Right ventricle myocardium inferior (tissue), 1 donor: ENCODE measurements at regions of chr3 and their contacts with region 1.

Region 1: DNA sequence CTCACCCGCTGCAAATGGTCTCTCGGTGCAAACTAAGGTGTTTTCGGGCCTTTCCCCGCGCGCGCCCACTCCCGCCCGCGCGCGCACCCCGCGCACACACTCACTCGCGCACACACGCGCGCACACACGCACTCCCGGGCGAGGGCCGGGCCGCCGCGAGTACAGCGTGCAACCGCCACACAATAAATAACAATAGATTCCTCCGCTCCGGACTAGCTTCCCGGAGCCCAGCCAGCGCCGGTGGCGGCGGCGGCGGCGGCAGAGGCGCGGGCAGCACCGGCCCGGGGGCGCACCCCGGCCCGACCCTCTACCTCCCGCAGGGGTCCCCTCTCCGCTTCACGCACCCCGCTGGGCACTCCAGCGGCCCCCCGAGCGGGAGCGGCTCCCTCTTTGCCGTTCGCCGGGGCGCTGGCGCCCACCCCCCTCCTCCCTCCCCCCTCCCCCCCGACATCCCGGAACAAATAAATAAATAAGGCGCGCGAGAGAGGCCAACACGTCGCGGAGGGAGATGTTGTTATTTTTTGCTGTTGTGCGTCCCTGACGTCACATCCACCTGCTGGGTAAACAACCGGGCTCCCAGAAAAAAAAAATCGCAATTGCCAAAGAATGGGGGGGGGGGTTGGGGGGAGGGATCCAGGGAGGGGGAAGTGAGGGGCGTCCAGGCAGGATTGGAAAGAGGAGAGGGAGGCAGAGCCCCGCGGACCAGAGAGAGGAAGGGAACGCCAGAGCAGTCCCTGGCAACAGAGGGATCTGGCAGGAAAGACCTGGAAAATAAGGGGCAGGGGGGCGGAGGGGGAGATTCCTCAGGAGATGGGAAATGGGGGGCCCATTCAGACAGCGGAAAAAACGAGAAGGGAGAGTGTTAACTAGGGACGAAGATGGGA is at the start of gene FOXP1:
- DNase-seq: peak; percentile 91
- ATAC-seq: peak; percentile 73
- total RNA-seq, gene FOXP1: 38.5 TPM

Region 2: GRCh38 chr3:70716832-70717231 is 867.0 kb before region 1 on chr3:
- intact Hi-C with region 1: loop called (anchors 5 kb)
- DNase-seq: peak; percentile 43
- ATAC-seq: no peak

Region 3: GRCh38 chr3:71064288-71064955 is 519.4 kb before region 1 on chr3:
- intact Hi-C with region 1: loop called (anchors 2 kb)
- DNase-seq: peak; percentile 72
- ATAC-seq: peak; percentile 30

Region 4: DNA sequence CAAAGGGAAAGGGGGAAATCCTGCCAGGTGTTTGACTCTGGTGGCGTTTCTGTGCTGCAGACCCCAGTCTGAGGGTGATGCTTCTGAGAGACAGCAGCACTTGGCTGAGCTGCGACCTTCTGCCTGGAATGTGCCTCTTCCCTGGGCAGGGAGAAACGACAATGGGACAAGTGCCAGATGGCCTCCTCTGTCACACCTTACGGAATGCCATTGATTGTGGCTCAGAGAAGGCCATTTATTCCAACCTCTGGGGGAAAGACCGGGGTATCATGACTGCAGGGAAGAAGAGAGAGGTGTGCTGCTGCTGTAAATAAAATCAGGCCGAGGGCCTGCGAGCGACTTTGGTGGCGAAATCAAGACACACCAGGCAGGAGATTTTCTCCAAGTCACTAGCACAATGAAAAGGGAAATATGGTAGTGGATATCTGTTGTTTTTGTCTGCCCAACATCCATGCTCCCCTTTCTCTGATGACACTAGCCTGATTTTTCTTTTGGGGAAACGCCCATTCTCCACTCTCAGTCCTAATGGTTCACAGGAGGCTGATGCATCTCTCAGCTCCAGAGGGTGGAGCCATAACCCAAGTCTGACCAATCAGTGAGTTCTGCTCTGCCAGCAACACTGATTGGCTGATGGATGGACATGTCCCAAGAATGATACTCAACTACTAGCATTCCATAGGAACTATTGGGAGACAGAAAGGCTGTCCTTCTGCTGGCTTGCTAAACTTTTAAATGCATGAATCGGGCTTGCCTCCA is 336.4 kb before region 1 on chr3:
- intact Hi-C with region 1: loop called (anchors 2 kb)
- DNase-seq: no peak
- ATAC-seq: no peak

Region 5: GRCh38 chr3:71397046-71397445 is 186.8 kb before region 1 on chr3:
- intact Hi-C with region 1: loop called (anchors 5 kb)
- DNase-seq: no peak
- ATAC-seq: no peak

Region 6: DNA sequence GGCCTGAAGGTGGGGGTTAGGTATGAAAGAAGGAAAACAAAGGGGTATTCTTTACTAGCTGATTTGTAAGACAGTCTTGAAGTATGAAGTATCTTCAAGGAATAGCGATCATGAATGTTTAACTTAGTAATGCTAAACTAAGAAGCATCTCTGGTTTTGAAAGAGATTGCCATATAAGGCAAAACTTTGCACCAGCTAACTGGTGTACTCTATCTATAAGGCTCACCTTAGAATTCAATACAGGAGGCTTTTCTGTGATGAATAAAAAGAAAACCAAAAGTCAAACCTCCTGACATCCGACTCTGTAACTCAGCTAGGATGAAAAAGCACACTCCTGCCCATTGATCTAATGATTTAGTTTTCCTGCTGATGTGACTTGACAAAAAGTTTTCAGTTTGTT is 55.0 kb before region 1 on chr3:
- intact Hi-C with region 1: no loop called
- DNase-seq: no peak
- ATAC-seq: no peak

Region 7: GRCh38 chr3:71673486-71673885 is 89.7 kb after region 1 on chr3:
- intact Hi-C with region 1: no loop called
- DNase-seq: no peak
- ATAC-seq: no peak

Region 8: DNA sequence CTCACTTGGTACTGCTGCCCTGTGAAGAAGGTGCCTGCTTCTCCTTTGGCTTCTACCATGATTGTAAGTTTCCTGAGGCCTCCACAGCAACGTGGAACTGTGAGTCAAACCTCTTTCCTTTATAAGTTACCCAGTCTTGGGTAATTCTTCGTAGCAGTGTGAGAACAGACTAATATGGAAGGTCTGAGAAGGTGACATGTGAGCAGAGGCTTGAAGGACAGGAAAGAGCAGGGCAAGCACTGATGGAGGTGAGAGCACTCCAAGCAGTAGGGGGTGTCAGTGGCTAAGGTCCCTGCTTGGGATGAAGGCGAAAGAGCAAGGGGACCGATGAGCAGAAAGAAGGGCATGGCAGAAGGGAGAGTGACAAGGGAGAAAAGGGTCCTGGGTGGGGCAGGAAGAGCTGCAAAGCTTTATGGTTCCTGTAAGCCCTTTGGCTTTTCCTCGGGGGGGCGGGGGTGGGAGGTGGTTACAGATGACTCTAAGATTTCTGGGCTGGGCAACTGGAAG is 137.9 kb after region 1 on chr3:
- intact Hi-C with region 1: no loop called
- DNase-seq: no peak
- ATAC-seq: no peak